ENCODE measurements at regions of chr2 and their contacts with region 1.

Region 1: GRCh38 chr2:102473020-102473419 is at the start of gene SLC9A4:
- DNase-seq: peak; percentile 71
- H3K4me3 Mint-ChIP-seq: no peak within 1 kb of the TSS
- H3K27ac Mint-ChIP-seq: no peak within 1 kb of the TSS
- H3K4me1 Mint-ChIP-seq: no peaks in the 10 kb centered on the region
- H3K27me3 Mint-ChIP-seq: peaks cover 24% of the 10 kb centered on the region
- total RNA-seq, gene SLC9A4: 0.10 TPM in 1 of 2 experiments, not detected in the other

Region 2: GRCh38 chr2:102449370-102449974 is 23.5 kb before region 1 on chr2:
- CTCF ChIA-PET with region 1: interaction called, 17 read pairs
- POLR2A ChIA-PET with region 1: no interaction called
- intact Hi-C with region 1: no loop called
- DNase-seq: peak; percentile 82
- H3K4me3 Mint-ChIP-seq: no peak overlapping the region
- H3K27ac Mint-ChIP-seq: no peak overlapping the region
- H3K4me1 Mint-ChIP-seq: no peaks in the 10 kb centered on the region
- H3K27me3 Mint-ChIP-seq: peaks cover 1% of the 10 kb centered on the region

Region 3: GRCh38 chr2:102489646-102490045 is 16.6 kb after region 1 on chr2:
- CTCF ChIA-PET with region 1: interaction called, 12 read pairs
- POLR2A ChIA-PET with region 1: no interaction called
- intact Hi-C with region 1: no loop called
- DNase-seq: no peak
- H3K4me3 Mint-ChIP-seq: no peak overlapping the region
- H3K27ac Mint-ChIP-seq: no peak overlapping the region
- H3K4me1 Mint-ChIP-seq: peaks cover 9% of the 10 kb centered on the region
- H3K27me3 Mint-ChIP-seq: peaks cover 24% of the 10 kb centered on the region

Region 4: DNA sequence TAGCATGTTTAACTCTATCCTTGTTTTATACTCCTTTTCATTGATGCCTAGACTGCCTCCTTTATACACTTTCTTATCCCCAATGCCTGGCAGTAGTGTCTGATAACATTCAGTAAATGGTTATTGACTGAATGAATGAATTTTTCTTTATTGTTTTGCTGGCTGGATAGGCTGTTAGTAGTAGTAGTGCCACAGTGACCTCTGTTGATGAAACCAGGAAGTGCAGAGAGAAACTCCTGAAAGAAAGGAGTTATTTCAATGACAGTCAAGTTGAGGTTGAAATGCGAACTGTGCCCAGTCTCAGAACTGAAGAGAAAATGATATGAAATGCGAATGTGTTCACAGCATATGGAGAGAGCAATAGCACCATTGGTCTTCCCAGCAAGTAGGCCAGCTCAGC is 119.6 kb after region 1 on chr2:
- CTCF ChIA-PET with region 1: interaction called, 56 read pairs
- POLR2A ChIA-PET with region 1: no interaction called
- intact Hi-C with region 1: loop called (anchors 1 kb)
- DNase-seq: peak; percentile 12
- H3K4me3 Mint-ChIP-seq: no peak overlapping the region
- H3K27ac Mint-ChIP-seq: no peak overlapping the region
- H3K4me1 Mint-ChIP-seq: no peaks in the 10 kb centered on the region
- H3K27me3 Mint-ChIP-seq: peaks cover 9% of the 10 kb centered on the region

Region 5: DNA sequence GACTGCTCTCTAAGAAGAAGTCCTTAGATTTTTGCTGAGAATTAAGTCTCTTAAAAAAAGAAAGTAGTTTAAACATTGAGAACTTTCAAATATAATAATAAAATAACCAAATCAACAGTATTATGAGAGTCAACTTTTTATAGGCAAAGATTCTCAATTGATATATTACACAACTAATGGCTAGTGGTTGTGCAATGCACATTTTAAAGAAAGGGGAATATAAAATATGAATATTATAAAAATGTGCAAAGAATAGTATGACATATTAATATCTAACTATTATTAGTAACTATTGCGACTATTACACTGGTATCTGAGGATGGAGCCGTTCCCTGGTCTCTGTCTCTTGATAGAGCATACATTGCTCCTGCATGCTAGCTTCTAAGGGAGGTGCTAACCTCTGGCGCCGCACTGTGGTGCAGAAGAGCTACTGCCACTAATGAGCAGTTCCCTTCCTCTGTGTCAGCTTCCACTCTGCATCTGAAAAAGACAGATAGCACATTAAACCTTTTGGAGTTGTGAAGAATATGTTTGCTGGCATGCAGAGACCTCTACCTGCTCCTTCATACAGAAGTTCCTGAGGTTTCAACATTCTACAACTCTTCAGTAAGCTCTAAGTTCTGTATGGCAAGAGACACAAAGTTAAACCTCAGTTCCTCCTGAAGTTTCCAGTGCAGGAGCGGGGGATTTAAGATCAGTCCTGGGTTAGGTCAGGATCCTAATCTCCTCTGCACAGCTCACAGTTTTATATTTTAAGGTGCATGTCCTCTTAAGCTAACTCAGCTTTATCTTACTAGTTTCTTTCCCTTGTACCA is 142.8 kb after region 1 on chr2:
- CTCF ChIA-PET with region 1: interaction called, 122 read pairs
- POLR2A ChIA-PET with region 1: no interaction called
- intact Hi-C with region 1: loop called (anchors 1 kb)
- DNase-seq: peak; percentile 64
- H3K4me3 Mint-ChIP-seq: no peak overlapping the region
- H3K27ac Mint-ChIP-seq: no peak overlapping the region
- H3K4me1 Mint-ChIP-seq: peaks cover 13% of the 10 kb centered on the region
- H3K27me3 Mint-ChIP-seq: peaks cover 42% of the 10 kb centered on the region

Region 6: GRCh38 chr2:102703748-102704147 is 230.7 kb after region 1 on chr2:
- CTCF ChIA-PET with region 1: interaction called, 10 read pairs
- POLR2A ChIA-PET with region 1: no interaction called
- intact Hi-C with region 1: loop called (anchors 10 kb)
- DNase-seq: peak; percentile 22
- H3K4me3 Mint-ChIP-seq: no peak overlapping the region
- H3K27ac Mint-ChIP-seq: no peak overlapping the region
- H3K4me1 Mint-ChIP-seq: no peaks in the 10 kb centered on the region
- H3K27me3 Mint-ChIP-seq: no peaks in the 10 kb centered on the region

Region 7: DNA sequence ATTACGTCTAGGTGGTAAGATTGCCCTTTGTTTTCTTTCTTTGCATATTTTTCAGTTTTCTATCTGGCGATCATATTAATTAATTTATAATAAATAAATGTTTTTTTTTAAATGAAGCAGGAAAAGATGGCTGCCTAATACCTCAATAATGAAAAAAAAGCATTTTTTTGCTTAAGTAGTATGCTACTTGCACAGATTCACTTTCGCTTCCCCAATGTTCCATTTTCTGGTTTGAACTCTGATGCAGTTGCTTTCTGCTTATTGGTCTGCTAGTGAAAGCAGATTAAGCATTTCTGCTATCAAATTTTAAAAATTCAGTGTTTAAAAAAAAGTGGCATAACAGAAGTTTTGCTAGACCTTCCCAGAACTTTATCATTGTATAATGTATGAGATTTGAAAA is 276.9 kb after region 1 on chr2:
- CTCF ChIA-PET with region 1: no interaction called
- POLR2A ChIA-PET with region 1: no interaction called
- intact Hi-C with region 1: no loop called
- DNase-seq: no peak
- H3K4me3 Mint-ChIP-seq: no peak overlapping the region
- H3K27ac Mint-ChIP-seq: no peak overlapping the region
- H3K4me1 Mint-ChIP-seq: no peaks in the 10 kb centered on the region
- H3K27me3 Mint-ChIP-seq: no peaks in the 10 kb centered on the region

Measured in activated CD4-positive, alpha-beta memory T cell treated with anti-CD3 and anti-CD28 coated beads for 36 hours (primary cell).